ENCODE measurements at regions of chr17 and their contacts with region 1.

Region 1: DNA sequence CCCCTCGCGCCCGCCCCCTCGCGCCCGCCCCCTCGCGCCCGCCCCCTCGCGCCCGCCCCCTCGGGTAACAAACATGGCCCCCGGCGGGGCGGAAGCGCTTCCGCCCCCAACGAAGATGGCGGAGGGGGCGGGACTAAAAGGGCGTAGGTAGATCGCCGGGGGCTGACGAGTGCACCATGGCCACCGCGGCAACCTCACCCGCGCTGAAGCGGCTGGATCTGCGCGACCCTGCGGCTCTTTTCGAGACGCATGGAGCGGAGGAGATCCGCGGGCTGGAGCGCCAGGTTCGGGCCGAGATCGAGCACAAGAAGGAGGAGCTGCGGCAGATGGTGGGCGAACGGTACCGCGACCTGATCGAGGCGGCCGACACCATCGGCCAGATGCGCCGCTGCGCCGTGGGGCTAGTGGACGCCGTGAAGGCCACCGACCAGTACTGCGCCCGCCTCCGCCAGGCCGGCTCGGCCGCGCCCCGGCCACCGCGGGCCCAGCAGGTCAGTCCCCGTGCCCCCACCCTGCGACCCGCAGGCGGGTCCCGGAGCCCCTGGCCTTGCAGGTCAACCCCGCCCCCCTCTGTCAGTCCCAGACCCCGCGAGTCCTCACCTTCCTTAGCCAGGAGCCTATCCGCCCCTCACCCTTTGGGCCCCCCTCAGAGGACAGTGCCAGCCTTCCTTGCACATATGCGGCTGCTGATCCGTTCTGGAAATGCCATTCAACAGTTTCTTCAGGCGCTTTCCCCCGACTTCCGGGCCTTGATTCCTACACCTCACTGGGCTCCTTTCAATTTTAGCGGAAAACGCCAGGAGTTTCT is at the start of gene COG1:
- DNase-seq: peak; percentile 79 to 95 (median 87)
- ATAC-seq: peak; percentile 74 to 92 (median 90)
- H3K4me3 ChIP-seq: peak within 1 kb of the TSS; percentile 62 to 100 (median 96)
- H3K27ac ChIP-seq: peak within 1 kb of the TSS; percentile 67 to 94 (median 88)
- H3K4me1 ChIP-seq: peaks cover 0 to 28% (median 16%) of the 10 kb centered on the region in 12 donors
- H3K27me3 ChIP-seq: no peaks in the 10 kb centered on the region
- CTCF ChIP-seq: peak in 1 of 12 donors; percentile 4
- POLR2A ChIP-seq: peak in 1 of 2 donors; percentile 40
- total RNA-seq, gene COG1: 38.4 to 65.6 (median 55.1) TPM

Region 2: DNA sequence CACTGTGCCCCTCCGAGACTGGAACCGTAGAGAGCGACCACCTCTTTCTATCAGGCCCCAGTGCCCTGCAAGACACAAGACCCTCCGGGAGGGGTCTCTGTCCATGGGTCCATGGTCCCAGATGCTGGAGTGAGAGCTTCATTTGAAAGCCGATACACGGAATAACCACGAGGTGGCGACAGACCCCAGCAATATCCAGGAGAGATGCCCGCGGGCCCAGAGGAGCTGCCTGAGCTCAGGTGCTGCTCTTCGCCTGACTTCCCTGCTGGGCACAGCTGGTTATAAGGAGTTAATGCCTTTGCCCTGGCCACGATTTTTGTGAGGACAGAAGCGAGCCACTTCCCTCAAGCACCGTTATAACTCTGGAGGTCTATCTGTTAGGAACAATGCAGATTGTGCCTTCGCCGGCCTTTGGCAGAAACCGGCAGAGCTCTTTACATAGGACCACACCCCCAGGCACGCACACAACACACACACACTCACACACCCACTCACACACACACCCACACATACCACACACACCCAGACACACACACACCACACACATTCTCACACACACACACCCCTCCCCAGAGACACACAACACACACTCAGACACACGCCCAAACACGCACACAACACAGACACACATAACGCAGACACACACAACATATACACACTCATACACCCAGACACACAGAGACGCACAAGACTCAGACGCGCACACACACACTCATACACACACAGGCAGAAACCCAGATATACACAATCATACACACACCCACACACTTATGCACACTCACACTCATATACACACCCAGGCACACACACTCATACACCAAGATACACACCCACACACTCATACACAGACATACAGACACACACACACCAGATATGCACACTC is 635.9 kb before region 1 on chr17:
- intact Hi-C with region 1: loop called in 2 of 10 experiments (anchors 2 to 10 kb)
- DNase-seq: peak in 4 of 5 donors; percentile 27 to 57 (median 40)
- ATAC-seq: peak in 3 of 4 donors; percentile 46 to 74 (median 63)
- H3K4me3 ChIP-seq: no peak overlapping the region
- H3K27ac ChIP-seq: no peak overlapping the region
- H3K4me1 ChIP-seq: no peaks in the 10 kb centered on the region
- H3K27me3 ChIP-seq: peaks cover 0 to 16% (median 0%) of the 10 kb centered on the region in 9 donors
- CTCF ChIP-seq: peak; percentile 49 to 85 (median 74)
- POLR2A ChIP-seq: no peak

Region 3: DNA sequence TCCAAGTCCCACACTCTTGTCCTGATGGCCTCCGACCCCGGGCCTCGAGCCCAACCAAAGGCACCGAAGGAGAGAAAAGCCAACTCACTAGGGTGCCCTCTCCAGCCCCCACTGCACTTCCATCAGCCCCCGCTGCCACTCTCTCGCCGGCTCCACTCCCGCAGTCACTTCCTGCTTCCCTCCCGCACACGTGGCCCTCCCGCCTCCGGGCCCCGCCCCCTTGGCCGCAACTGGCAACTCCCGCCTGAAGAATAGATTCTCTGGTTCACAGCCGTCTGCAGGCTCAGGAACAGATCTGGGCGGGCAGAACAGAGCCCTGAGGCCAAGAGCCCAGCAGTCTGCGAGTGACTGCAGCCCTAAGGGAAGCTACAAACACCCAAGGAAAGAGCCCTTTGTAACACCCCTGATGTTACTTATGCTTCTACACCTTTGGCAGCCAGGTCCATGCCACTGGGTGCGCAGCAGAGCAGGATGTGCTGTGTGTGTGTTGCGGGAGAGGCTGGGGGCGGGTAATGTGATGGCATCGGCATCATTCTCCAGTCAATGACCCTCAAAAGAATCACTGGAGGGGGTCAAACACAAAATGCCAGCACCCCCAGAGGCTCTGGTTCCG is 100.5 kb before region 1 on chr17 and contains the start of gene SLC39A11:
- intact Hi-C with region 1: loop called in 1 of 10 experiments (anchors 5 kb)
- DNase-seq: peak; percentile 92 to 95 (median 94)
- ATAC-seq: peak; percentile 88 to 100 (median 99)
- H3K4me3 ChIP-seq: peak within 1 kb of the TSS; percentile 25 to 87 (median 72)
- H3K27ac ChIP-seq: peak within 1 kb of the TSS in 11 of 12 donors; percentile 17 to 78 (median 71)
- H3K4me1 ChIP-seq: peaks cover 0 to 31% (median 13%) of the 10 kb centered on the region in 12 donors
- H3K27me3 ChIP-seq: no peaks in the 10 kb centered on the region
- CTCF ChIP-seq: no peak
- POLR2A ChIP-seq: peak in 1 of 2 donors; percentile 41
- total RNA-seq, gene SLC39A11: 5.6 to 23.3 (median 8.6) TPM

Region 4: GRCh38 chr17:73156166-73156840 is 36.8 kb before region 1 on chr17:
- intact Hi-C with region 1: no loop called
- DNase-seq: peak; percentile 63 to 83 (median 67)
- ATAC-seq: peak; percentile 60 to 98 (median 94)
- H3K4me3 ChIP-seq: no peak overlapping the region
- H3K27ac ChIP-seq: no peak overlapping the region
- H3K4me1 ChIP-seq: peaks cover 0 to 13% (median 0%) of the 10 kb centered on the region in 12 donors
- H3K27me3 ChIP-seq: peaks cover 0 to 29% (median 6%) of the 10 kb centered on the region in 9 donors
- CTCF ChIP-seq: peak; percentile 64 to 87 (median 77)
- POLR2A ChIP-seq: no peak

Region 5: DNA sequence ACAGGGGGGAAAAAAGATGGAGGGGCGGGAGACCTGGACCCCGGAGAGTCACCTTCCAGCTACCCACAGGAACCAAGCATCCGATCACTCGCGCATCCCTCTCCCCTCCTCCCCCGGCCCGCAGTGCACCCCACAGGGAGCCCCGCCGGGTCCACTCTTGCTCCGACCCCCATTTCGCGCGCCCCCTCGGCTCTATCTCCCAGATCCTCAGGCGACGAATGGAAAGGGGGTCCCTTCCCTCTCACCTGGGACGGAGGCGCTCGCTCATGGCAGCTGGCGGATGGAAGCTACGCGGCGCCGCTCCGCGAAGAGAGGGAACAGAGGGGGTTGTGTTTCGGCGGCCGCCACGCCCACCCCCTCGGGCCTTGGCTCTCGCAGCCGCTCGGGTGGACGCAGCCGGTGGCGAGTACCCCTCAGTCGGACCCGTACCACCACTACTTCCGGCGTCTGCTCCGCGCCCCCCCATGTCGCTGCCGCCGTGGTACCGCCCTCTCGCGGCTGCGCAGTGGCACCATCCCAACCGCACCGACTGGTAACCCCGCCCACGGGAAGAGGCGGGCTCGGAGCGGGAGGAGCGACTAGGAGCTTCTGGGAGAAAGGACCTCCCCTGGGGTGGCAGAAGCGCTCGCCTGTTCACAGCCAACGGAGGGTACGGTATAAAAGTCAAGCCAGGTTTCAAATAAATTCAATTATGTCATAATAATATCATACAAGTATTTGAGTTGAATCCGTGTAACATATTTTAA is 38.9 kb after region 1 on chr17:
- intact Hi-C with region 1: loop called in 9 of 10 experiments (anchors 1 to 5 kb)
- DNase-seq: peak; percentile 97 to 98 (median 97)
- ATAC-seq: peak; percentile 93 to 97 (median 96)
- H3K4me3 ChIP-seq: peak overlapping the region; percentile 56 to 100 (median 88)
- H3K27ac ChIP-seq: peak overlapping the region; percentile 61 to 96 (median 89)
- H3K4me1 ChIP-seq: peaks cover 5 to 58% (median 45%) of the 10 kb centered on the region in 12 donors
- H3K27me3 ChIP-seq: no peaks in the 10 kb centered on the region
- CTCF ChIP-seq: peak in 10 of 12 donors; percentile 13 to 64 (median 47)
- POLR2A ChIP-seq: peak in 1 of 2 donors; percentile 82

Region 6: GRCh38 chr17:73247726-73248125 is 54.6 kb after region 1 on chr17:
- intact Hi-C with region 1: loop called in 1 of 10 experiments (anchors 5 kb)
- DNase-seq: no peak
- ATAC-seq: no peak
- H3K4me3 ChIP-seq: no peak overlapping the region
- H3K27ac ChIP-seq: no peak overlapping the region
- H3K4me1 ChIP-seq: no peaks in the 10 kb centered on the region
- H3K27me3 ChIP-seq: no peaks in the 10 kb centered on the region
- CTCF ChIP-seq: peak in 5 of 12 donors; percentile 11 to 29 (median 20)
- POLR2A ChIP-seq: no peak

Region 7: GRCh38 chr17:73365906-73366623 is 173.0 kb after region 1 on chr17:
- intact Hi-C with region 1: loop called in 4 of 10 experiments (anchors 5 kb)
- DNase-seq: peak; percentile 65 to 75 (median 73)
- ATAC-seq: peak; percentile 53 to 87 (median 69)
- H3K4me3 ChIP-seq: peak overlapping the region in 7 of 12 donors; percentile 4 to 26 (median 19)
- H3K27ac ChIP-seq: peak overlapping the region; percentile 50 to 82 (median 73)
- H3K4me1 ChIP-seq: peaks cover 0 to 35% (median 19%) of the 10 kb centered on the region in 12 donors
- H3K27me3 ChIP-seq: no peaks in the 10 kb centered on the region
- CTCF ChIP-seq: no peak
- POLR2A ChIP-seq: peak in 1 of 2 donors; percentile 47